Heart right ventricle (tissue), 16 donors: ENCODE measurements at regions of chr17 and their contacts with region 1.

Region 1: DNA sequence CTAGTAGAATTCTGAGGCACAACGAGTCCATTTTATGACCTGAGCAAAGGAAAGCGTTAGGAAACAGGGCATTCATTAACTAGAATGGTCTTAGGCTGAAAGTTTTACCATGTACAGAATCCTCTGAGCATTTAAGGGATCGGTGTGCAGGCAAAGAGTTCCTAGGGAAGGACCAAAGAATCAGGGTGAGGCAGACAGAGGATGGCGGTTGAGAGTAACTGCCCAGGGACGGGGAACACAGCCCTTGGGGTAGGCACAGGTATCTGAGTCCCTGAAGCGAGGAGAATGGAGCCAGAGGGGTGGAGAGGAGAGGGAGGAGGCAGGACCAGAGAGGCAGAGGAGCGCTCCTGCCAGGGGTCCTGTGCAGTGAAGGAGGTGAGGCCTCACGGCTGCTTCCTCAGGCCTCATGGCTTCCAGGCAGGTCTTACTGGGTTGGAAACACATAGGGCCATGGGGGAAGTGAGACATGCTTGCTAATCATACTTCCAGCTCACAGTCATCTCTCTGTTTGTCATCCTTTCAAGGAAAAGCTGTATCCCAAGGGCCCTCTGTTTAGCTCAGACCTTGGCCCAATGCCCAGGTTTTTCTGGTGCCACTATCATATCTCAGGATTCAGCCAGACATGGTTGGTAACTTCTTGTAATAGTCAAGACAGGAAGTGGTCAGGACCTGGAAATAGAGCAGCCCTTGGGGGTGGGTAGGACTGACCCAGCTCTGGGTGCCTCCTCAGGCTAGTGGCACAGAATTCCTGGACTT is 13.8 kb upstream of the ITGB3 start:
- DNase-seq: peak; percentile 52 to 88
- ATAC-seq: peak; percentile 68 to 91 (median 88)
- H3K4me3 ChIP-seq: no peak overlapping the region
- H3K27ac ChIP-seq: peak overlapping the region in 9 of 10 donors; percentile 37 to 88 (median 77)
- H3K4me1 ChIP-seq: peaks cover 0 to 24% (median 21%) of the 10 kb centered on the region in 9 donors
- H3K27me3 ChIP-seq: no peaks in the 10 kb centered on the region
- CTCF ChIP-seq: no peak

Region 2: GRCh38 chr17:47162013-47162622 is 77.7 kb before region 1 on chr17:
- intact Hi-C with region 1: no loop called
- DNase-seq: no peak
- ATAC-seq: no peak
- H3K4me3 ChIP-seq: no peak overlapping the region
- H3K27ac ChIP-seq: peak overlapping the region in 3 of 10 donors; percentile 13 to 45 (median 29)
- H3K4me1 ChIP-seq: peaks cover 0 to 42% (median 16%) of the 10 kb centered on the region in 9 donors
- H3K27me3 ChIP-seq: no peaks in the 10 kb centered on the region
- CTCF ChIP-seq: no peak

Region 3: DNA sequence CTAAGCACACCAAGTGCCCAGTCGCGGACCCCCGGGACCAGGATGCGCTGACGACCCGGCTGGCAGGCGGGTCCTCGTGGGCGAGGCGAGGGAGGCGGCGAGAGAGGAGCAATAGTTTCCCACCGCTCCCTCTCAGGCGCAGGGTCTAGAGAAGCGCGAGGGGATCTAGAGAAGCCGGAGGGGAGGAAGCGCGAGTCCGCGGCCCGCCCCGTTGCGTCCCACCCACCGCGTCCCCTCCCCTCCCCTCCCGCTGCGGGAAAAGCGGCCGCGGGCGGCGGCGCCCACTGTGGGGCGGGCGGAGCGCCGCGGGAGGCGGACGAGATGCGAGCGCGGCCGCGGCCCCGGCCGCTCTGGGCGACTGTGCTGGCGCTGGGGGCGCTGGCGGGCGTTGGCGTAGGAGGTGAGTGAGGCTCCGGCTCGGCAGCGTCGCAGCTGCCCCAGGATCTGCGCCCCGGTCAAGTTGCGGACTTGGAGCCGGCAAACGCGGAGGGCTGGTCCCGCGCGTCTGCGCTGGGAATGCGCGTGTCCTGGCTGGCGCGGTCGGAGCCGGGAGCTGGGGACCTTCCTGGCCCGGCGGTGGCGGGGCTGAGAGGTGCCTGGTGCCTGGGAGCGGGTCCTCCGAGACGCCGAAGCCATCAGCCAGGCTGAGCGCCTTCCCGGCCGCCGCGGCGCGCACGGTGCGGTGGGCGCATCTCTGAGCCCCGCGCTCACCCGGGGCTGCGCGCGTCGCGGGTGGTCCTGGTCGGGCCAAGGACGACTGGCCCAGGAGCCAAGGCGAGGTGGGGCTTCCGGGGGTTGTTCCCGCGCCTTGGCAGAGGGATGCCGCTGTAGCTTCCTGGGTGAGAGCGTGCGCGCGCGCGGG is 14.0 kb after region 1 on chr17 and contains the start of gene ITGB3:
- intact Hi-C with region 1: no loop called
- DNase-seq: peak; percentile 77 to 82
- ATAC-seq: peak; percentile 92 to 97 (median 96)
- H3K4me3 ChIP-seq: peak within 1 kb of the TSS; percentile 54 to 90 (median 78)
- H3K27ac ChIP-seq: peak within 1 kb of the TSS; percentile 48 to 89 (median 80)
- H3K4me1 ChIP-seq: peaks cover 2 to 48% (median 12%) of the 10 kb centered on the region in 9 donors
- H3K27me3 ChIP-seq: peaks cover 0 to 55% (median 0%) of the 10 kb centered on the region in 7 donors
- CTCF ChIP-seq: peak in 8 of 9 donors; percentile 21 to 69 (median 48)
- total RNA-seq, gene ITGB3: 2.5 to 18.0 (median 3.5) TPM

Region 4: GRCh38 chr17:47265983-47266541 is 26.3 kb after region 1 on chr17:
- intact Hi-C with region 1: no loop called
- DNase-seq: no peak
- ATAC-seq: peak in 6 of 8 donors; percentile 53 to 82 (median 70)
- H3K4me3 ChIP-seq: no peak overlapping the region
- H3K27ac ChIP-seq: peak overlapping the region in 4 of 10 donors; percentile 9 to 36 (median 25)
- H3K4me1 ChIP-seq: peaks cover 0 to 46% (median 6%) of the 10 kb centered on the region in 9 donors
- H3K27me3 ChIP-seq: no peaks in the 10 kb centered on the region
- CTCF ChIP-seq: no peak

Region 5: DNA sequence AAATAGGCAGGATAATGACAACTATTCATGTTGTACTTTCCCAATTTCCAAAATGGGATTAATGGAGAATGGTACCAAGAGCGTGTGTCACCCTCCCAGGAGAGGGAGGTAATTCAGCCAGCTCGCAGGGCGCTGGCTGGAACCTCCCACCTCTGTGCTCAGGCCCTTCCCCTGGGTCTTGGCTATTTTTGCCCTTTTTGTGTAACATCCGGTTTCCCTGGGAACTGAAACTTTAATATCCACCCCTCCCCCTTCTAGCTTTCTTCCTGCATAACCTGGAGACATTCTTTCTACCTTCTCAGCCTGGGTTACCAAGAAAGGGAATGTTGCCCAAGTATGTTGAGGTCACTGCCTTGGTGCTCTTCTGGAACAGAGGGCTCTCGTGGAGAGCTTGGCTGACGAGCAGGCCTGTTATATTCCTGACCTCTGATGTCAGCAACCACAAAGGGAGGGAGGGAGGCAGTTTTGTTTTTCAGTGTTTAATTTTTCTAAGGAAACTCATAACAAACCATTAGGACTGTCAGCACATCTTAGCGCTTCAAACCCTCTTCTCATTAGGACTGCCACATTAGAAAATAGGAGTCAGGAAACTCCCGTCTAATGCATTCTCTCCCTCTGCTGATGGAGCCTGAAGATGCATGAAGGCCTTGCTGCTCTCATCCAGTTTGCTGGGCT is 39.4 kb after region 1 on chr17:
- intact Hi-C with region 1: loop called in 1 of 10 experiments (anchors 5 kb)
- DNase-seq: peak; percentile 67 to 82
- ATAC-seq: peak; percentile 65 to 82 (median 79)
- H3K4me3 ChIP-seq: peak overlapping the region in 1 of 10 donors; percentile 9
- H3K27ac ChIP-seq: peak overlapping the region; percentile 73 to 92 (median 86)
- H3K4me1 ChIP-seq: peaks cover 40 to 71% (median 57%) of the 10 kb centered on the region in 9 donors
- H3K27me3 ChIP-seq: no peaks in the 10 kb centered on the region
- CTCF ChIP-seq: peak in 2 of 9 donors; percentile 10 to 15

Region 6: DNA sequence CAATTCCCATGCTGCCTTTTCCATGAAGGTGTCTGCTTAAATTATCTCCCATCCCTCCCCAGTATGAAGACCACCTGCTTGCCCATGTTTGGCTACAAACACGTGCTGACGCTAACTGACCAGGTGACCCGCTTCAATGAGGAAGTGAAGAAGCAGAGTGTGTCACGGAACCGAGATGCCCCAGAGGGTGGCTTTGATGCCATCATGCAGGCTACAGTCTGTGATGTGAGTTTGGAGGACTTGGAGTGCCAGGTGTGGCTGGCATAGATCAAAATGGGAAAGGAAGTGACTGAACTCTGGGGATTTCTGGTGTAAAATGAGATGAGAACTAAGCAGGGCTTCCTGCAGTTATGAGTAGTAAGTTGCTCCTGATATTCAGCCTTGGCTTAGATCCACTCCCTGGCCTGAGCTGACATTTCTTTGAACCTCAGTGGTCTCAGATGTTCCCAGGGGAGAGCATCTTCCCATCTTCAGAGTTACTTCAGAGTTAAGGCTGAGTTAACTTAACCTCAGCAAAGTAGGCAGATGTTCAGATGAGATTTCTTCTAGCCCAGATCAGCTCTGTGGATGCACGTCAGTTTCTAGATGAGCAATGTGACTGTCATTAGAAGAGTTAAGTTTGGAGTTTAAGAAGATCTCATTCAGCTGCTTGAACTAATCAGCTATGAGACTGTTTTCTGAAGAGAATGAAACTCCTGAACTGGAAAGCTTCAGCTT is 46.6 kb after region 1 on chr17:
- intact Hi-C with region 1: loop called in 1 of 10 experiments (anchors 5 kb)
- DNase-seq: no peak
- ATAC-seq: peak in 1 of 8 donors; percentile 9
- H3K4me3 ChIP-seq: no peak overlapping the region
- H3K27ac ChIP-seq: peak overlapping the region in 2 of 10 donors; percentile 34 to 58
- H3K4me1 ChIP-seq: peaks cover 0 to 19% (median 0%) of the 10 kb centered on the region in 9 donors
- H3K27me3 ChIP-seq: no peaks in the 10 kb centered on the region
- CTCF ChIP-seq: no peak

Region 7: GRCh38 chr17:47305302-47305923 is 65.6 kb after region 1 on chr17:
- intact Hi-C with region 1: loop called in 2 of 10 experiments (anchors 5 kb)
- DNase-seq: no peak
- ATAC-seq: peak; percentile 38 to 82 (median 68)
- H3K4me3 ChIP-seq: no peak overlapping the region
- H3K27ac ChIP-seq: peak overlapping the region in 6 of 10 donors; percentile 28 to 70 (median 48)
- H3K4me1 ChIP-seq: peaks cover 0 to 19% (median 10%) of the 10 kb centered on the region in 9 donors
- H3K27me3 ChIP-seq: no peaks in the 10 kb centered on the region
- CTCF ChIP-seq: no peak

Region 8: DNA sequence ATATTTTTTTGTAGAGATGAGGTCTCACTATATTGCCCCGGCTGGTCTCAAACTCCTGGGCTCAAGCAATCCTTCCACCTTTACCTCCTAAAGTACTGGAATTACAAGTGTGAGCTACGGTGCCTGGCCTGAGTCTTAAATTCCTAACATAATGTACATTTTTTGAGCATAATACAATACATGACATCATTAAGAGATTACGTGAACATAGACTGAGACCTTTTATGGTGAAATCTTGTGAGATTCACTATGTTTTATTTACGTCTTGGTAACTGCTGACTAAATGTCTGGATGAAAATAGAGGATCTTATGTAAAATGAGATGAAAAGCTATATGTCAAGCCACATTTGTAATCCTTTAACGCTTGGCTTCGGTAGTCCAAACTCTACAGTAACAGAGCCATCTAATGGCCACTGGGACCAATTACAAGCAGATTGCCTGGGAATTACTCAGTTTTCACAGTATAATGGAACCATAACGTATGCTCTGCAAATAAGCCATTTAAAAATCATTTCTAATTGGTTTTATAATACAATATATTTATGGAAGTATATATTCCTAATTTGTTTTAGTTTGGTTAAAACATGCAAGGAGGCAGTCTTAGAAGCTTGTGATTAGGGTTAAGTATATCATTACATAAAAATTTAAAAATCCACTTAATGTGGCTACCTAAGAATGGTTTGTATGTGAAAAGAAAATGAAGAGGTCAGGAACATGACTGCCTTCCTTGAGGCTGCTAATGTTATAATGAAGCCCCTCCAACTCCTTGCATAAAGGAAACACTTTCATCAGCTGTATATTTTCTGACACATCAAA is 75.9 kb after region 1 on chr17:
- intact Hi-C with region 1: loop called in 2 of 10 experiments (anchors 2 to 5 kb)
- DNase-seq: peak in 1 of 2 donors; percentile 33
- ATAC-seq: peak in 7 of 8 donors; percentile 58 to 88 (median 83)
- H3K4me3 ChIP-seq: no peak overlapping the region
- H3K27ac ChIP-seq: peak overlapping the region in 4 of 10 donors; percentile 5 to 49 (median 12)
- H3K4me1 ChIP-seq: peaks cover 0 to 18% (median 6%) of the 10 kb centered on the region in 9 donors
- H3K27me3 ChIP-seq: no peaks in the 10 kb centered on the region
- CTCF ChIP-seq: peak; percentile 55 to 93 (median 84)